ENCODE measurements at regions of chr2 and their contacts with region 1.

Region 1: GRCh38 chr2:226791487-226792081 is 8.0 kb downstream of the IRS1 start:
- DNase-seq: peak; percentile 46 to 95
- H3K4me3 ChIP-seq: peak overlapping the region; percentile 70 to 75
- H3K27ac ChIP-seq: peak overlapping the region; percentile 93 to 94
- H3K4me1 ChIP-seq: peaks cover 9 to 34% of the 10 kb centered on the region in 2 donors
- H3K27me3 ChIP-seq: no peaks in the 10 kb centered on the region
- CTCF ChIP-seq: peak in 2 of 3 experiments; percentile 39 to 74

Region 2: DNA sequence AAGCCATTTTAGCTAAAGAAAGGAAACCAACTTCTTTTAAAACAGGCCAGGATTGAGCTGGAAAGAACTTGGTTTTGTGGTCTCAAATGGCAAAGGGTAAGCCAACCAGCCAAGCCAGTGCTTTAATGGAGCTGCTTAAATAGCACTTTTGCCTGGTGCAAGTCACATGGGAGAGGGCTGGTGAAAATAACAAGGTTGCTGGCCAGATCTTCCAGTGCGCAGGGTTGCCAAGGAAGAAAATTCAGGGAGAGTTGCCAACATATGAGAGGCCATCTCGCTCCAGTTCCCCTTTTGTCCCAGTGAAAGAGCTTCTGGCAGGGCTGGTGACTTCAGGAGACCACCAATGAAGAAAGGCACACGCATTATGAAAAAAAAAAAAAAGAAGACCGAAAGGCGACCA is 49.2 kb before region 1 on chr2:
- intact Hi-C with region 1: loop called (anchors 5 kb)
- DNase-seq: peak in 1 of 2 donors; percentile 68
- H3K4me3 ChIP-seq: peak overlapping the region in 1 of 2 donors; percentile 5
- H3K27ac ChIP-seq: peak overlapping the region; percentile 60 to 66
- H3K4me1 ChIP-seq: peaks cover 0 to 29% of the 10 kb centered on the region in 2 donors
- H3K27me3 ChIP-seq: no peaks in the 10 kb centered on the region
- CTCF ChIP-seq: no peak

Region 3: DNA sequence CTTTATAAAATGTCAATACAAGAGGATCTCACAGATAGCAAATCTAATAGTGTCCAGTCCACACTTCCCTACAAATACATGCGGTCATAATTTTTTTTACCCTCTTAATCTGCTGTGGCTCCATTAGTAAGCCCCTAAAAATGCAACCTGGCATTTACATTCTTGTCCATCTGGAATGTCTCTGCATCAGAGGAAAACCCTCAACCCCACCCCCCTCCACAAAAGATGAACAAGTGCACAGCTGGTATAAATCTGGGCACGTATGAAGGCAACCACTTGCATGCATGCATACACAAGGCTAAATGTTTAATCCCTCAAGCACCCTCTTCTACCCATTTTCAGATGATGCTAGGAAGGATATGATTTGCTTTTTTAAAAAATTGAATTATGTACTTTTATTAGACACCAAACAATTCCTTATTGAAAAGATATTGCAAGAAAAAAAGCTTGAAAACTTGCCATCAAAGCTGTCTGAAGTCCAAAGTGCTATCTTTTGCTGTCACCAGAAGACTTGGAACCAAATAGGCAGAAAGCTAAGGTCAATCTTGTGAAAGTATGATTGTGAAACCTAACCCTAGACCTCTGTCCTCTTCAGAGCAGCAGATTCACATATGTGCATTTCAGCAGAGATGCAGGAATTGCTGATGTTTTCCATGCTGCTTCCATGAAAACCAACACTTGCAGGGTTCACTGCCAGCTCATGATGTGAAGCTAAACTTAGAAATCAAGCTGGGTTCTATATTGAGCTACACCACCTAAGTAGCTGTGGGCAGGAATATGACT is 31.0 kb before region 1 on chr2:
- intact Hi-C with region 1: loop called (anchors 2 kb)
- DNase-seq: no peak
- H3K4me3 ChIP-seq: no peak overlapping the region
- H3K27ac ChIP-seq: peak overlapping the region; percentile 31 to 52
- H3K4me1 ChIP-seq: peaks cover 7 to 41% of the 10 kb centered on the region in 2 donors
- H3K27me3 ChIP-seq: no peaks in the 10 kb centered on the region
- CTCF ChIP-seq: no peak

Region 4: GRCh38 chr2:226828191-226828590 is 36.6 kb after region 1 on chr2:
- intact Hi-C with region 1: no loop called
- DNase-seq: no peak
- H3K4me3 ChIP-seq: no peak overlapping the region
- H3K27ac ChIP-seq: no peak overlapping the region
- H3K4me1 ChIP-seq: no peaks in the 10 kb centered on the region
- H3K27me3 ChIP-seq: no peaks in the 10 kb centered on the region
- CTCF ChIP-seq: no peak

Region 5: DNA sequence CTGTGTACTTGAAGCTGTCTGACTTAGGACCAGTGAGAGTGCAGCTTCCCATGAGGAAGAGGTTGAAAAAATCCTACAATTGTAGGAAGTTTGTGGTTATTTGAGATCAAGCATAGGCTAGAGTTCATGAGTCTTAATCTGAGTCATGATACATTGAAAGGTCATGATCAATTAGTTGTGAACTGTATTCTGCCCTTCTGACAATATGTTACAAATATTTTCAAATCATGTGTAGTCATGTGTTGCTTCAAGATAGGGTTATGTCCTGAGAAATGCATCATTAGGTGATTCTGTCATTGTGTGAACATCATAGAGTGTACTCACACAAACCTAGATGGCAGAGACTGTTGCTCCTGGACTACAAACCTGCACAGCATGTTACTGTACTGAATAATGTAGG is 465.0 kb after region 1 on chr2:
- intact Hi-C with region 1: no loop called
- DNase-seq: no peak
- H3K4me3 ChIP-seq: no peak overlapping the region
- H3K27ac ChIP-seq: no peak overlapping the region
- H3K4me1 ChIP-seq: no peaks in the 10 kb centered on the region
- H3K27me3 ChIP-seq: no peaks in the 10 kb centered on the region
- CTCF ChIP-seq: no peak